ENCODE measurements at regions of chr6 and their contacts with region 1.

Region 1: DNA sequence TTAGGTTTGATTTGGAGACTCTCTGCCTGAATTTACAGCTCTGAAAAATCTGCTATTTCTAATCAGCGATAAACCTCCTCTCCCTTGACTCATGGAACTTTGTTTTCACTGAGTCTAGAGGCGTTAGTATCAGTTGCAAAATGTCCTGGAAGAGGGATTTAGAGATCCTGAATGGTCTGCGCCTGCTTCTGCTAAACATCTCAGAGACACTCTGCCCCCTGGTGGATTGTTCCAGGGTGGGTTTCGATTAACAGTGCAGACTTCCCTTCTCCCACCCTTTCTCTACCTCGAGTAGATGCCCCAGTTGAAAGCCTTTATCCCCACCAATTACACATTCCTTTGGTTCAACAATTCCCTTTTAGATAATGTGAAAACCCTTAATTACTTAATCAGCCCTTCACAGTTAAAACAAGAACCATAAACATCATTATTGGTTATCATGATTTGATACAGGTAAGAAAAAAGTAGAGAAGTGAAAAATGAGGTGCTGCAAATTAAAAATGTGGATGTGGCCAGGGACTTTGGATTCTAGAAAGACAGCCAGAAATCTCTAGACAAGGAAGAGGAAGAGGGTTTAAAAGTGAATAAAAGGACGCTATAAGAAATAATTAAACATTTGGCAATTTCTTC is 5.5 kb downstream of the HTR1B start:
- DNase-seq: peak; percentile 97
- ATAC-seq: peak; percentile 69
- H3K4me3 ChIP-seq: no peak overlapping the region
- H3K27ac ChIP-seq: no peak overlapping the region
- H3K4me1 ChIP-seq: peaks cover 7% of the 10 kb centered on the region
- H3K27me3 ChIP-seq: peaks cover 5% of the 10 kb centered on the region; the same call in 1 of the 2 replicates
- CTCF ChIP-seq: peak; percentile 84
- POLR2A ChIP-seq: 0 out of 2 replicates have a peak, but pooled peaks have one; percentile 31
- RAD21 ChIP-seq: peak; percentile 93

Region 2: GRCh38 chr6:75893058-75893775 is 1564.6 kb before region 1 on chr6:
- CTCF ChIA-PET with region 1: no interaction called
- POLR2A ChIA-PET with region 1: no interaction called
- dilution Hi-C with region 1: no loop called
- in situ Hi-C with region 1: no loop called
- intact Hi-C with region 1: loop called (anchors 1 kb)
- DNase-seq: peak; percentile 80
- ATAC-seq: peak; percentile 71
- H3K4me3 ChIP-seq: no peak overlapping the region
- H3K27ac ChIP-seq: no peak overlapping the region
- H3K4me1 ChIP-seq: no peaks in the 10 kb centered on the region
- H3K27me3 ChIP-seq: no peaks in the 10 kb centered on the region
- CTCF ChIP-seq: peak; percentile 72
- POLR2A ChIP-seq: no peak
- RAD21 ChIP-seq: peak; percentile 77

Region 3: DNA sequence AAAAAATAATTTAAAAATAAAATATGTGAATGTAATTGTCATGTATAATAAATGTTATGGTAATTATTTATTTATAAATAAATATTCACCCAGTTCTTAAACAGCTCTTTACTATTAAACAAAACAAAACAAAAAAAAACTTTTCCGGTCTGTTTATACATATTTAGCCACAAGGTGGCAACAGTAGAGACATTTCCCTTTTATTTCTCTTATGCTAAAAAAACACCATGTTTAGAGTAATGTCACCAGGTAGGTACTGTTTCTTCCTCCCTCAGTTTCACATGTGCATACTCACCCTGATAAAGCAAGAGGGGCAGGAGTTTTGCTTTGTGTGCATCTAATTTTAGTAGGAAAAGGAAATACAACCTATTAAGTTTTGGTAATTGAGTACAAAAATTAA is 775.0 kb before region 1 on chr6:
- CTCF ChIA-PET with region 1: no interaction called
- POLR2A ChIA-PET with region 1: no interaction called
- dilution Hi-C with region 1: no loop called
- in situ Hi-C with region 1: loop called (anchors 5 kb)
- intact Hi-C with region 1: loop called (anchors 1 kb)
- DNase-seq: peak; percentile 10
- ATAC-seq: no peak; the same call in 1 of the 2 replicates
- H3K4me3 ChIP-seq: no peak overlapping the region
- H3K27ac ChIP-seq: no peak overlapping the region
- H3K4me1 ChIP-seq: no peaks in the 10 kb centered on the region
- H3K27me3 ChIP-seq: no peaks in the 10 kb centered on the region
- CTCF ChIP-seq: peak; percentile 47
- POLR2A ChIP-seq: no peak
- RAD21 ChIP-seq: peak; percentile 20; the same call in 1 of the 2 replicates

Region 4: GRCh38 chr6:76861403-76861802 is 596.4 kb before region 1 on chr6:
- CTCF ChIA-PET with region 1: no interaction called
- POLR2A ChIA-PET with region 1: no interaction called
- dilution Hi-C with region 1: no loop called
- in situ Hi-C with region 1: no loop called
- intact Hi-C with region 1: loop called (anchors 10 kb)
- DNase-seq: no peak
- ATAC-seq: no peak
- H3K4me3 ChIP-seq: no peak overlapping the region
- H3K27ac ChIP-seq: no peak overlapping the region
- H3K4me1 ChIP-seq: no peaks in the 10 kb centered on the region
- H3K27me3 ChIP-seq: no peaks in the 10 kb centered on the region
- CTCF ChIP-seq: peak; percentile 11; the same call in 1 of the 2 replicates
- POLR2A ChIP-seq: no peak
- RAD21 ChIP-seq: no peak

Region 5: GRCh38 chr6:77173472-77174074 is 284.3 kb before region 1 on chr6:
- CTCF ChIA-PET with region 1: no interaction called
- POLR2A ChIA-PET with region 1: no interaction called
- dilution Hi-C with region 1: no loop called
- in situ Hi-C with region 1: no loop called
- intact Hi-C with region 1: loop called (anchors 1 kb)
- DNase-seq: peak; percentile 13
- ATAC-seq: peak; percentile 59
- H3K4me3 ChIP-seq: no peak overlapping the region
- H3K27ac ChIP-seq: no peak overlapping the region
- H3K4me1 ChIP-seq: 0 out of 2 replicates have a peak, but pooled peaks cover under 1% of the 10 kb centered on the region
- H3K27me3 ChIP-seq: no peaks in the 10 kb centered on the region
- CTCF ChIP-seq: 0 out of 2 replicates have a peak, but pooled peaks have one; percentile 27
- POLR2A ChIP-seq: no peak
- RAD21 ChIP-seq: peak; percentile 24; the same call in 1 of the 2 replicates

Region 6: DNA sequence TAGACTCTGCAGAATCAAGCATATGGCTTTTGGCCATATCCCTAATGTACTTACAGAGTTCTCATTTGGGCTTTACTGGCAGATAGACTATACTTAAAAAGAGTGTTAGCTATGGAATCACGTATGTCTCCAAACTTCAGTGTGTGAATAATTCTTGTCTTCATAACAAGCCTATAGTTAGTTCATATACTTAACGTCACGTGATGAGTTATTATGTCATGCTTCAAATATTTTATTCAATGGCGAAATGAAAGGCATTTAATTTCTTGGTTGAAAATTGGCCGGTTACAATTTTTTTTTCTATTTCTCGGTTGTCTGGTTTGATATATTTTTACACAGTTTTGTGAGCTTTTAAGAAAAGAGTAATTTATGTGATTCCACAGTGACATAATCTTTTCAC is 257.8 kb after region 1 on chr6:
- CTCF ChIA-PET with region 1: no interaction called
- POLR2A ChIA-PET with region 1: no interaction called
- dilution Hi-C with region 1: no loop called
- in situ Hi-C with region 1: no loop called
- intact Hi-C with region 1: no loop called
- DNase-seq: no peak
- ATAC-seq: no peak
- H3K4me3 ChIP-seq: no peak overlapping the region
- H3K27ac ChIP-seq: no peak overlapping the region
- H3K4me1 ChIP-seq: no peaks in the 10 kb centered on the region
- H3K27me3 ChIP-seq: no peaks in the 10 kb centered on the region
- CTCF ChIP-seq: no peak
- POLR2A ChIP-seq: no peak
- RAD21 ChIP-seq: no peak

Region 7: DNA sequence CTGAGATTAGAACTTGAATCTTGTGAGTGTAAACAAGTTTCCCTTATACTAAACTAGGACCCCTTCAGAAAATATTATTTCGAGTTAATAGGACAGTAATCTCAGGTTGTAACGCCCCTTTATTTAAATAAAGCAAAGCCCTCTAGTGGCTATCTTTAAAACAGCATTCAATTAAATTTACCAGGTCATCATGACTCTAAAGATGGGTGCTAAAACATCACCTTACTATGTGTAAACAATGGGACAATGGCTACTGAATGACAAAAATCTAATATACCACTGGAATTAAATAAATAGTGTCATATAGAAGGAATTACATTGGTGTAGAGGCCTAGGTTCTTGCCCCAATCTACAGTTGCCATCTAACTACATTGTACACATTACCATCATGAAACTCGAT is 1154.1 kb after region 1 on chr6:
- CTCF ChIA-PET with region 1: no interaction called
- POLR2A ChIA-PET with region 1: no interaction called
- dilution Hi-C with region 1: no loop called
- in situ Hi-C with region 1: loop called (anchors 25 kb)
- intact Hi-C with region 1: no loop called
- DNase-seq: no peak
- ATAC-seq: peak; percentile 61; the same call in 1 of the 2 replicates
- H3K4me3 ChIP-seq: no peak overlapping the region
- H3K27ac ChIP-seq: no peak overlapping the region
- H3K4me1 ChIP-seq: peaks cover 11% of the 10 kb centered on the region
- H3K27me3 ChIP-seq: no peaks in the 10 kb centered on the region
- CTCF ChIP-seq: peak; percentile 62
- POLR2A ChIP-seq: no peak
- RAD21 ChIP-seq: peak; percentile 37

Measured in IMR-90 (cell line).